Activated naive CD4-positive, alpha-beta T cell treated with anti-CD3 and anti-CD28 coated beads for 36 hours (primary cell): ENCODE measurements at regions of chr14 and their contacts with region 1.

Region 1: DNA sequence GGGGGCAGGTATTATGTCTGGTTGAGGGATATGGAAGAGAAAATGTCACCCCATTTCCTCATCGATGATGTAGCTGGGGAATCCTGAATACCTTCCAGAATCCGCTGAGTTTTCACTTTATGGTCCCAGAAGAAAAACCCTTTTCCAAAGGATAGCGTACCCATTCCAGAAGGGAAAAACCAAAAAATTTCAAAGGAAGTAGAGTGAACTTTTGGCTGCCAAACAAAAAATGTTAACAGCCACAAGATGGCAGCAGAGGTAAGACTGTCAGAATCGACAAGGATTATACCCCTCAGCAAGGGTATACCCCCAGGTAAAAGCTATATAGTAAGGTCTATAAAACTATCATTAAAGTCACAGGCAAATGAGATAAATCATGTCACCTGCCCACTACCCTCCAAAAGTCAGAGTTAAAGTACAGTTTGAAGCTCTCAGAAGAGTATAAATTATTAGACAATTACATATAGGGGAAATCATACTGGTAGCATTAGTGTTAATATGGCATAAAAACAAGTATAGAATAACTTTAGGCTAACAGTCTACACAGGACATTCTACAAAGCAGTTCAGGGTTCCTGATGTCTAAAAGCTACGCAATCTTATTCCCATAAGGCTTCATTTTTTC is 18.0 kb downstream of the ACIN1 start:
- DNase-seq: peak; percentile 37
- H3K4me3 Mint-ChIP-seq: no peak overlapping the region
- H3K27ac Mint-ChIP-seq: no peak overlapping the region
- H3K4me1 Mint-ChIP-seq: peaks cover 9% of the 10 kb centered on the region
- H3K27me3 Mint-ChIP-seq: no peaks in the 10 kb centered on the region

Region 2: GRCh38 chr14:23104591-23105347 is 27.9 kb after region 1 on chr14 and contains the start of gene CIROP:
- CTCF ChIA-PET with region 1: interaction called, 15 read pairs
- intact Hi-C with region 1: loop called (anchors 1 kb)
- DNase-seq: no peak
- H3K4me3 Mint-ChIP-seq: no peak within 1 kb of the TSS
- H3K27ac Mint-ChIP-seq: no peak within 1 kb of the TSS
- H3K4me1 Mint-ChIP-seq: no peaks in the 10 kb centered on the region
- H3K27me3 Mint-ChIP-seq: no peaks in the 10 kb centered on the region
- total RNA-seq, gene CIROP: not detected

Region 3: DNA sequence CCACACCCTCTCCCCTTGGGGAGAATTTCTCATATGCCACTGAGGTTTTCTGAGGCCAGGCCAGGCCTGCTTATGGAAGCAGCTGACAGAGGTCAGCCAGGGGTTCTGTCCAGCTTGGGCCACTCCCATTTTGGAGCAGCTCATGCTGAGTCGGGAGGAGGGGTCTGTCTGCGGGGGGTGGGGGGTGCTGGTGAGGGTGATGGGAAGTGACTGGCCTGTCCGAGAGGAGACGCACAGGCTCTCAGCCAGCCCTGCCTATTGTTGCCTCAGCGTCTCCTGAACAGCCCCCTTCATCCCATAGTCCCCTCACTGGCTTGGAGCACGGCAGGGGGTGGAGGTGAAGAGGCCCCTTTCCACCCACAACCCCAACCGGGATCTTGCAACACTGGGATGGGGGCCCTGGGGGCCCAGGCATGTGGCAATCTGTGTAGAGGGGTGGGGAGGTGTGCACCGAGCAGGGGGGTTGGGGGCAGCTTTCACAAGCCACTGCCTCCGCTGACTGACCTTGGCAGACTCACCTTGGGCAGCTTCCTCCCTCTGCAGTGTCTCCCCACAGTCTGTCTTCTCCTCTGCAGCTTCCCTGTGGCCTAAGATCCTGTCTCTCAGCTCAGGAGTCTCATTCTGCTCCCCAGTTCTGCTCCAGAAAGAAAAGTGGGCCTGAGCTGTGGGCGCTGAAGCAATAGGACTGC is 36.7 kb after region 1 on chr14:
- CTCF ChIA-PET with region 1: interaction called, 27 read pairs
- intact Hi-C with region 1: loop called (anchors 1 kb)
- DNase-seq: no peak
- H3K4me3 Mint-ChIP-seq: no peak overlapping the region
- H3K27ac Mint-ChIP-seq: no peak overlapping the region
- H3K4me1 Mint-ChIP-seq: peaks cover 15% of the 10 kb centered on the region
- H3K27me3 Mint-ChIP-seq: no peaks in the 10 kb centered on the region

Region 4: DNA sequence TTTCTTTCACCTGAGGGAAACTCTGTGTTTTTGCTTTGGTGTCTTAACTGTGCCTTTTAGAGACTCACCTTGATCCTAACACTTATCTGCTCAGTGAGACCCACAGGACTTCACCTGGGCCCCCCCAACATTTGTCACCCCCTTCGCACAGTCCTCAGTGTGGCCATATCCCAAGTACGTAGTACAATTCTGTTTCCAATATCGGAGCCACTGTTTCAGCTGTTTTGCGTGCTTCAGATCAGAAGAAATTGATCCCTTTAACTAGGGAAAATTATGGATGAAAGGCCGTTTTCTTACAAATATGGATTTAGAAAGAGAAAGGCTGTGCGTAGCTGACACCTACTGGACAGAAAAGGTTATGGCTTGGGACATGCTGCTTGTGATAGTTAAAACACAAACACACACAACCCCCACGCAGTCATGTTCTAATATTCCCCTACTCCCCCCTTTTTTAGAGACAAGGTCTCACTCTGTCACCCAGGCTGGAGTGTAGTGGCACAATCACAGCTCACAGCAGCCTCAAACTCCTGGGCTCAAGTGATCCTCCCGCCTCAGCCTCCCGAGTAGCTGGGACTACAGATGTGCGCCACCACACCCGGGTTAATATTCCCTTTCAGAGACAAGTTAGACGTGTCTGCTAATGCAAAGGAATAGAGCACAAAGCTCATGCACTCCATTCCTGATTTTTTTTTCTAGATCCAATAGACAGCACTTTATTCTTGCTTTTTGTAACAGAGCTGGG is 110.2 kb after region 1 on chr14:
- CTCF ChIA-PET with region 1: interaction called, 22 read pairs
- intact Hi-C with region 1: no loop called
- DNase-seq: peak; percentile 55
- H3K4me3 Mint-ChIP-seq: no peak overlapping the region
- H3K27ac Mint-ChIP-seq: no peak overlapping the region
- H3K4me1 Mint-ChIP-seq: no peaks in the 10 kb centered on the region
- H3K27me3 Mint-ChIP-seq: no peaks in the 10 kb centered on the region